ENCODE measurements at regions of chr22 and their contacts with region 1.

Region 1: GRCh38 chr22:21001560-21002325 is at the start of gene THAP7:
- DNase-seq: peak; percentile 99
- ATAC-seq: peak; percentile 92
- H3K4me3 Mint-ChIP-seq: peak within 1 kb of the TSS; percentile 92
- H3K27ac Mint-ChIP-seq: peak within 1 kb of the TSS; percentile 96
- H3K4me1 Mint-ChIP-seq: peaks cover 19% of the 10 kb centered on the region
- H3K27me3 Mint-ChIP-seq: no peaks in the 10 kb centered on the region
- total RNA-seq, gene THAP7: 25.1 to 27.2 TPM

Region 2: DNA sequence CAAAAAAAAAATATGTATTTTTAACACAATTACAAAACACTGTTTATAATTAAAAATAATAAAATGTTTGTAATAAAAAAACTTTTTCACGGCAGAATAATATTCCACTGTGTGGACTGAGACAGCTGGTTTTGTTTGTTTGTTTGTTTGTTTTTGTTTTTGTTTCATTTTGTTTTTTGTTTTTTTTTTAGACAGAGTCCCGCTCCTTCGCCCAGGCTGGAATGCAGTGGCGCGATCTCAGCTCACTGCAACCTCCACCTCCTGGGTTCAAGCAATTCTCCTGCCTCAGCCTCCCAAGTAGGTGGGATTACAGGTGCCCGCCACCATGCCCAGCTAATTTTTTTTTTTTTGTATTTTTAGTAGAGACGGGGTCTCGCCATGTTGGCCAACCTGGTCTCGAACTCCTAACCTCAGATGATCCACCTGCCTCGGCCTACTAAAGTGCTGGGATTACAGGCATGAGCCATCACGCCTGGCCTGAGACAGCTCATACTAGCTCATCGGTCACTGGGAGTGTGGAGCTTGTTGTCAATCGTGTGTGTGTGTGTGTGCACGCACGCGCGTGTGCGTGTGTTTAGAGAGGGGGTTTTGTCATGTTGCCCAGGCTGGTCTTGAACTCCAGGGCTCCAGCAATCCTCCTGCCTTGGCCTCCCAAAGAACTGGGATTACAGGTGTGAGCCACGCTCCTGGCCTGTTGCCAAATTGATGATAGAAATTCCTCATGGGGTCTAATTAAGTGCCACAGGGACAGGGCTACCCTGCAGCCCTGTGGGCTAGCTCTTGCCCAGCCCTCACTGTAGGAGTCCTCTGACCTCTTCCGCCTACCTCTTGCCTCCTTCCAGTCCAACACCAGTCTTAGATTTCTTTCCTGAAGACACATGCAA is 41.9 kb before region 1 on chr22:
- CTCF ChIA-PET with region 1: no interaction called
- POLR2A ChIA-PET with region 1: no interaction called
- intact Hi-C with region 1: no loop called
- DNase-seq: no peak
- ATAC-seq: no peak
- H3K4me3 Mint-ChIP-seq: no peak overlapping the region
- H3K27ac Mint-ChIP-seq: no peak overlapping the region
- H3K4me1 Mint-ChIP-seq: peaks cover 21% of the 10 kb centered on the region
- H3K27me3 Mint-ChIP-seq: peaks cover 24% of the 10 kb centered on the region

Region 3: DNA sequence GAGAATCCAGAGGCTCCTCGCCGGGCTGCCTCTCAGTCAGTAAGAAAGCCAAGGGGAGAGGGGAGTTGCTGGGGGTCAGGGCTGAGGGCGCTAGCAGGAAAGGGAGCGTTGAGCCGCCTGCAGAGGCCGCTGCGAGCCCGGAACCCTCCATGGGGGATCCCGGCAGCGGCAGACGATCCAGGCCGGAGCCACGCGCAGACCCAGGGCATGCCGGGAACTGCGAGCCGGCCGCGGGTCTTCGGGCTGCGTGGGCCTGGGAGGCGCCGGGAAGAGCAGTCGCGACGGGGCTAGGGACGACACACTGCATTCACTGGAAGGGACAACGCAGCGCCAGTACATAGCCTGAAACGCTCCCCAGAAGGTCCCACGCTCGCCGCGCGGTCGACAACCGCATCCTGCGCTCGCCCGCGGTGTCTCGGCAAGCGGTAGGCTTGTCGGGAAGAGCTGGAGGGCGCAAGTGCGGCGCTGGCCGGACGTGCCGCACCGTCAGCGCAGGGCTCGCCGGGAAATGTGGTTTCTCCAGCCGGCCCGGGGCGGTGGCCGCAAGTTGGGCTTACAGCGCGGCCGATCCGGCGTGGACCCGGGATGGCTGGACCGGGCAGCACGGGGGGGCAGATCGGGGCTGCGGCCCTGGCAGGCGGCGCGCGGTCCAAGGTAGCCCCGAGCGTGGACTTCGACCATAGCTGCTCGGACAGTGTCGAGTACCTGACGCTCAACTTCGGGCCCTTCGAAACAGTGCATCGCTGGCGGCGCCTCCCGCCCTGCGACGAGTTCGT is 19.8 kb before region 1 on chr22 and contains the start of gene LZTR1:
- CTCF ChIA-PET with region 1: interaction called, 10 read pairs
- POLR2A ChIA-PET with region 1: interaction called, 9 read pairs
- intact Hi-C with region 1: loop called (anchors 1 to 2 kb)
- DNase-seq: peak; percentile 85
- ATAC-seq: peak; percentile 74
- H3K4me3 Mint-ChIP-seq: peak within 1 kb of the TSS; percentile 98
- H3K27ac Mint-ChIP-seq: peak within 1 kb of the TSS; percentile 92
- H3K4me1 Mint-ChIP-seq: peaks cover 40% of the 10 kb centered on the region
- H3K27me3 Mint-ChIP-seq: no peaks in the 10 kb centered on the region
- total RNA-seq, gene LZTR1: 31.9 to 40.5 TPM

Region 4: GRCh38 chr22:21014202-21014725 is 12.5 kb after region 1 on chr22:
- CTCF ChIA-PET with region 1: interaction called, 3 read pairs
- POLR2A ChIA-PET with region 1: interaction called, 5 read pairs
- intact Hi-C with region 1: loop called in 1 of 2 experiments (anchors 1 kb)
- DNase-seq: peak; percentile 91
- ATAC-seq: peak; percentile 97
- H3K4me3 Mint-ChIP-seq: peak overlapping the region; percentile 78
- H3K27ac Mint-ChIP-seq: peak overlapping the region; percentile 67
- H3K4me1 Mint-ChIP-seq: peaks cover 20% of the 10 kb centered on the region
- H3K27me3 Mint-ChIP-seq: no peaks in the 10 kb centered on the region

Region 5: DNA sequence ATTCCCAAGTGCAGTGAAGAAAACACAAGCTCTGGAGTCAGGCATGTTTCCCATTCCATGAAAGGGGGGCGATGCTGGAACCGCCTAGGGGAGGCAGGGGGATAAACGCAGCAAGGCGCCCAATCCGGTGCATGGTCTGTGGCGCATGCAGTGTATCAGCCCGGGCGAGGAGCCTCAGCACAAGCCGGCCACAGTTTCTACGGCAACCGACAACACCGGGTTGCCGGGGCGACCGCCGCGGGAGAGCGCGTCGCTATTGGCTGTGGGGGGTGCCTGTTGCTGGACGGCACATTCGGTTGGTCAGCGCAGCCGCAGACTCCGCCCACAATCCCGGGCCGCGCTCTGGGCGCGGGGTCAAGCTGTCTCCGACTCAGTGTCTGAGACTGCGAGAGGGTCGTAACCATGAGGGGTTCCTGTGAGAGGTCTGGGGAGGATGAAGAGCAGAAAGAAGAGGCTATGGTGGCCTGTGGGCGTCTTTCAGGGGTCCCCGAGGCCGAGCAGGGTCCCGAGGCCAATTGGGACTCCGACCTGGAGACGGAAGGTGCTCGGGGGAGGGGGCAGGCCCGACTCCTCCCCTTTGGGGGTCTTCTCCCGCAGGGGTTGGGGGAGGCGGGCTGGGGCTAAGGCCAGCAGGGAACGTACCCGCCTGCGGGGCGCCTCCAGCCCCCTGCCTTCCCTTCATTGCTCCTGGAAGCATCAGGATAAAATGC is 44.0 kb after region 1 on chr22 and contains the start of gene LRRC74B:
- CTCF ChIA-PET with region 1: no interaction called
- POLR2A ChIA-PET with region 1: no interaction called
- intact Hi-C with region 1: loop called in 1 of 2 experiments (anchors 1 kb)
- DNase-seq: peak; percentile 85
- ATAC-seq: peak; percentile 99
- H3K4me3 Mint-ChIP-seq: peak within 1 kb of the TSS; percentile 50
- H3K27ac Mint-ChIP-seq: no peak within 1 kb of the TSS
- H3K4me1 Mint-ChIP-seq: peaks cover 23% of the 10 kb centered on the region
- H3K27me3 Mint-ChIP-seq: peaks cover 15% of the 10 kb centered on the region
- total RNA-seq, gene LRRC74B: not detected